Motor neuron (in vitro differentiated cells): ENCODE measurements at regions of chr5 and their contacts with region 1.

Region 1: GRCh38 chr5:100903039-100903887 is at the start of gene ST8SIA4:
- ATAC-seq: peak; percentile 57 to 93 (median 84)
- H3K4me3 ChIP-seq: peak within 1 kb of the TSS; percentile 54 to 96 (median 74)
- H3K27ac ChIP-seq: peak within 1 kb of the TSS; percentile 13 to 14
- H3K4me1 ChIP-seq: peaks cover 7 to 8% of the 10 kb centered on the region in 2 donors
- total RNA-seq, gene ST8SIA4: 0.07 to 44.4 (median 18.0) TPM

Region 2: GRCh38 chr5:100623719-100624118 is 279.5 kb before region 1 on chr5:
- in situ Hi-C with region 1: loop called in 1 of 9 experiments (anchors 25 kb)
- ATAC-seq: peak in 4 of 8 experiments; percentile 40 to 73 (median 60)
- H3K4me3 ChIP-seq: no peak overlapping the region
- H3K27ac ChIP-seq: no peak overlapping the region
- H3K4me1 ChIP-seq: no peaks in the 10 kb centered on the region